Activated CD4-positive, alpha-beta T cell treated with anti-CD3 and anti-CD28 coated beads, Interleukin-2, amount 10 ng/mL, durations not matched to agents 24 days and 14 days (primary cell): ENCODE measurements at regions of chr1 and their contacts with region 1.

Region 1: DNA sequence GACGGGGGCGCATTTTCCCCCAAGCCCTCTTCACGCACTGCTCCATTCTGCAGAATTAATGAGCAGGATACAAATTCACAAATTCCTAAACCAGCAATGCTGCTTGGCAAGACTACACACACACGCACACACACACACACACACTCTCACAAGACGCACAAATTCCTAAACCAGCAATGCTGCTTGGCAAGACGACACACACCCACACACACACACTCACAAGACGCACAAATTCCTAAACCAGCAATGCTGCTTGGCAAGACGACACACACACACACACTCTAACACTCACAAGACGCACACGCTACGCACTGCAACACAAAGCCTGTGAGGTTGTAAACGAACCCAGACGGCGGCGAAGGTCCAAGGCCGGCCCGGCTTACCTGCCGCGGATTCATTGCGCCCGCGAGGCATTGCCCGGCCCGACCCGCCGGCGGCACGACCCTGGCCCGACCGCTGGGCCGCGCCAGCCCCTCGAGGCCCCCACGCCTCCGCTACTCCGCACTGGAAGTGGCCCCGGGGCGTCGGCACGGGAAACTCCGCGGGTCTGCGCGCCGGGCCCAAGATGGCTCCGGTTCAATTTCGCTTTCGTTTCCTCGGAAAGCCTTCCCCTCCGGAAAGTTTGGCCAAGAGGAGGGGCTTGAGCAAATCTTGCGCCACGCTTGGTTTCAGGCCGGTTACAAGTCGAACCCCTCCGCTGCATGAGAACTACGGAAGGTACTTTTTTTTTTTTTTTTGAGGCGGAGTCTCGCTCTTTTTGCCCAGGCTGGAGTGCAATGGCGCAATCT is at the start of gene ADAR:
- DNase-seq: peak; percentile 98
- H3K4me3 Mint-ChIP-seq: peak within 1 kb of the TSS; percentile 92
- H3K27ac Mint-ChIP-seq: peak within 1 kb of the TSS; percentile 99
- H3K4me1 Mint-ChIP-seq: peaks cover 72% of the 10 kb centered on the region
- H3K27me3 Mint-ChIP-seq: no peaks in the 10 kb centered on the region
- total RNA-seq, gene ADAR: 293 and 306 TPM in 2 replicates

Region 2: DNA sequence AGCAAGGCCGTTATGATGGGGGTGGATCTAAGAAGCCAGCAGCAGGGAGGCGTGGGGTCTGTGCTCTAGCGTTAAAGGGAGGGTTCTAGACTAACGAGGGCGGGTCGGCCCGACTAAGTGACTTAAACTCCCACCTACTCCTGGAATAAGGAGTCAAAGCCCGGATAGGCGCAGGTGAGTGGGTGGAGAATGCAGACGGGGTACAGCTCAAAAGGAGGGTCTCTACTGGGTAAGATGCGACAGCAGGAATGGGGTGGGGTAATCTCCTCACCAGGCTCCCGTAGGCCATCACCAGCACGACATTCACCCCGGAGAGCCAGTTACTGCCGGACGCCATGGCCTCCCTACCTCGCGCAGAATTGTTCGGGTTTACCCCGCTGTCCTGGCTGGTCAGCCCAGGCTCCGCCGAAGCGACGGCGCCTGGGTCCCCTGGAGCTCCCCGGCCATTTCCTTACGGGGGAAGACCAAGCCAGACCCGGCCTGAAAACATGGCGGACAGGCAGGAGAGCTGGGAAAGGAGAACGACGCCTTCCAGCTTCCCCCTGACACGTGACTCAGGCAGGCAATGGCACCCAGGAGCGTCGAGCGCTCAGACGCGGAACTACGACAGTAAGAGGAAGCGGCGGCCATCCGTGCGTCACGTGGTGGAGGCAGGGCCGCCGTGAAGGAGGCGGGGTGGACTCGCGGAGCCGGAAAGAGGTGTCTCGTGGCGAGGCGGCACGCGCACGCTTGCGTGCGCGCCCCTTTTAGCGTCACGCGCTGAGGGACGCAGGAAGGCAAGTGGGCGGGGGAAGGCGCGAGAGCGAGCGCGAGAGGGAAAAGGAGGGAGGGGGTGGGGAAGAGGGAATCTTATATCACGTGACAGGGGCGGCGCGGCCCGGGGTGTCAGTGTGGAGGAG is 387.5 kb before region 1 on chr1 and contains the start of gene UBAP2L:
- intact Hi-C with region 1: loop called (anchors 10 kb)
- DNase-seq: peak; percentile 100
- H3K4me3 Mint-ChIP-seq: peak within 1 kb of the TSS; percentile 96
- H3K27ac Mint-ChIP-seq: peak within 1 kb of the TSS; percentile 95
- H3K4me1 Mint-ChIP-seq: peaks cover 55% of the 10 kb centered on the region
- H3K27me3 Mint-ChIP-seq: peaks cover 3% of the 10 kb centered on the region
- total RNA-seq, gene UBAP2L: 277 and 281 TPM in 2 replicates

Region 3: GRCh38 chr1:154627257-154628120 is 19.7 kb after region 1 on chr1:
- intact Hi-C with region 1: loop called (anchors 1 kb)
- DNase-seq: peak; percentile 97
- H3K4me3 Mint-ChIP-seq: peak overlapping the region; percentile 98
- H3K27ac Mint-ChIP-seq: peak overlapping the region; percentile 99
- H3K4me1 Mint-ChIP-seq: peaks cover 35% of the 10 kb centered on the region
- H3K27me3 Mint-ChIP-seq: peaks cover 18% of the 10 kb centered on the region

Region 4: GRCh38 chr1:154682254-154682653 is 74.5 kb after region 1 on chr1:
- intact Hi-C with region 1: no loop called
- DNase-seq: no peak
- H3K4me3 Mint-ChIP-seq: no peak overlapping the region
- H3K27ac Mint-ChIP-seq: no peak overlapping the region
- H3K4me1 Mint-ChIP-seq: no peaks in the 10 kb centered on the region
- H3K27me3 Mint-ChIP-seq: peaks cover 14% of the 10 kb centered on the region

Region 5: GRCh38 chr1:154755858-154756730 is 148.3 kb after region 1 on chr1:
- intact Hi-C with region 1: loop called (anchors 1 kb)
- DNase-seq: peak; percentile 69
- H3K4me3 Mint-ChIP-seq: peak overlapping the region; percentile 14
- H3K27ac Mint-ChIP-seq: peak overlapping the region; percentile 88
- H3K4me1 Mint-ChIP-seq: peaks cover 72% of the 10 kb centered on the region
- H3K27me3 Mint-ChIP-seq: no peaks in the 10 kb centered on the region

Region 6: GRCh38 chr1:154791292-154792166 is 183.7 kb after region 1 on chr1:
- intact Hi-C with region 1: loop called (anchors 5 kb)
- DNase-seq: peak; percentile 93
- H3K4me3 Mint-ChIP-seq: peak overlapping the region; percentile 63
- H3K27ac Mint-ChIP-seq: peak overlapping the region; percentile 81
- H3K4me1 Mint-ChIP-seq: peaks cover 28% of the 10 kb centered on the region
- H3K27me3 Mint-ChIP-seq: peaks cover 18% of the 10 kb centered on the region